GM12878 (cell line): ENCODE measurements at regions of chr3 and their contacts with region 1.

Region 1: GRCh38 chr3:169990431-169990830 is 23.8 kb downstream of the SEC62 start:
- DNase-seq: no peak
- ATAC-seq: no peak
- H3K4me3 ChIP-seq: no peak overlapping the region
- H3K27ac ChIP-seq: no peak overlapping the region
- H3K4me1 ChIP-seq: no peaks in the 10 kb centered on the region
- H3K27me3 ChIP-seq: no peaks in the 10 kb centered on the region
- CTCF ChIP-seq: no peak
- EP300 ChIP-seq: no peak
- POLR2A ChIP-seq: no peak
- RAD21 ChIP-seq: no peak

Region 2: DNA sequence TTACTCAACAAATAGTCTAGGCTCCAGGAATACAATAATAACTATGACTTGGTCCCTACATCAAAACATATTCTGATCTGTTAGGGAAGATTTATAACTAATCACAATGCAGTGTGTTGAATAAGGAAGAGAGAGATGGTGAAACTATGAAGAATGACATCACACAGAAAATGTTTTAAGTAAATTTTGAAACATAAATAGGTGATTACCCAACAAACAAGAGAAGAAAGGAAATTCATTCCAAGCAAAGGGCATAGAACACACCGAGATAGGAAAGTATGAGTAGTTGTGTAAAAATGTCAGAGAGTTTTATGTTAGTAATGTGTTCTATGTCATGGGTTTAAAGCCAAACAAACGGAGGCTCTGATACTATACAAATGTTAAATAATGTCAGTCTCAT is 10.4 kb before region 1 on chr3:
- CTCF ChIA-PET with region 1: interaction called, 18 read pairs
- POLR2A ChIA-PET with region 1: no interaction called
- RAD21 ChIA-PET with region 1: no interaction called
- SMC1A ChIA-PET with region 1: interaction called, 22 read pairs
- in situ Hi-C with region 1: no loop called
- intact Hi-C with region 1: no loop called
- DNase-seq: no peak
- ATAC-seq: no peak
- H3K4me3 ChIP-seq: no peak overlapping the region
- H3K27ac ChIP-seq: no peak overlapping the region
- H3K4me1 ChIP-seq: peaks cover 6% of the 10 kb centered on the region
- H3K27me3 ChIP-seq: no peaks in the 10 kb centered on the region
- CTCF ChIP-seq: no peak
- EP300 ChIP-seq: no peak
- POLR2A ChIP-seq: no peak
- RAD21 ChIP-seq: no peak